Vagina (tissue), 2 donors: ENCODE measurements at regions of chr7 and their contacts with region 1.

Region 1: DNA sequence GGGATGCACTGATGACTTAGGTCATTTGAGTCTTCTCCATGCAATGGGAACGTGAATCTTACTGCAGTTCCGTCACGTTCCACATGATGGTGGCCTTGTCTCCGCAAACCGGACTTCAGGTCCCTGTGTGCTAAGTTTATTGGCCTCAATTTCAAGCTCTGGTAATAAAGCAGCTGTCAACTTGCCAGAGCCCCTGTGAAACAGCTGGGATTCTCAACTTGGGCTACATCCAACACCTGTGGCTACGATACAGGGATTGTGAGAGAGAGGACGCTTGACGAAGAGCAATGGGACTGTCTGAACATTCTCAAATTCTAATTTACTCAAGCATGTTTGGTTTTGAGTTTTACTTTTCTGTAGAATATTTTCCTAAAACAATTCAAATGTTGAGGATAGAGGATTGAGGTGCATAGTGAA is 174.2 kb downstream of the PTN start:
- DNase-seq: peak in 1 of 2 donors; percentile 87
- H3K4me3 ChIP-seq: no peak overlapping the region
- H3K27ac ChIP-seq: no peak overlapping the region
- H3K4me1 ChIP-seq: no peaks in the 10 kb centered on the region
- H3K27me3 ChIP-seq: no peaks in the 10 kb centered on the region
- CTCF ChIP-seq: peak; percentile 28 to 47 (median 28)
- POLR2A ChIP-seq: no peak

Region 2: DNA sequence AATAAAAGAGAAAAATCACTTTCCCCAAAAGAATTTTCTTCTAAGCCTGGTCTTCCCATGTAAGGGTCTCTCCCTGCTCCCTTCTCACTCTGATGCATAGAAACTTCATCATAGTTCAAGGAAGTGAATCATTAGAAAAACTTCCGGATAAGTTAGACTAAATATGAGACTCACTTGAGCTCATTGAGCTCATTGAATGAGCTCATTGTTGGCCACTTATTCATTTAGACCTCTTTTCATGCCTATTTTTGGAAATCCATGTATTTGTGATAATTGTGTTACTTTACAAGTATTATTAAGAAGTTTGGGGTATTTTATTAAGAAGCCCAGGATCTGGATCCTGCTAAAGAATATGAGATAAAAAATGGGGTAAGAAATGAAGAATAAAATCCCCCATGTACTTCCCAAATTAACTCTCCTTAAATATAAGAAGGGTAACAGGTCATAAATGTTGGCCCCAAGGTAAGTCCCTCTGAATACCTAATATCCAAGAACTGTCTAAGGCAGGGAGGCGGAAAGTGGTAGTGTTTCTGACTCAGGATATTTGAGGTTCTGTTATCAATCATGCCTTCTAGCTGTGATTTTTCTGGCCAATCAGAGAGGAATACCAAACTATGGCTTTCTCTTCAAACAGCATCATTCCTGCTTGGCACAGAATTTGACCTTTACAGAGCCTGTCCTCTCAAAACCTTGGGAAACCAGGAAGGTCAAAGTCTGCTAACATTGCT is 410.8 kb after region 1 on chr7:
- intact Hi-C with region 1: loop called (anchors 10 kb)
- DNase-seq: no peak
- H3K4me3 ChIP-seq: no peak overlapping the region
- H3K27ac ChIP-seq: no peak overlapping the region
- H3K4me1 ChIP-seq: no peaks in the 10 kb centered on the region
- H3K27me3 ChIP-seq: no peaks in the 10 kb centered on the region
- CTCF ChIP-seq: no peak
- POLR2A ChIP-seq: no peak